Activated naive CD4-positive, alpha-beta T cell treated with anti-CD3 and anti-CD28 coated beads for 36 hours (primary cell): ENCODE measurements at regions of chr13 and their contacts with region 1.

Region 1: GRCh38 chr13:98672944-98673545 is 79.4 kb downstream of the SLC15A1 start:
- DNase-seq: peak; percentile 66
- H3K4me3 Mint-ChIP-seq: no peak overlapping the region
- H3K27ac Mint-ChIP-seq: no peak overlapping the region
- H3K4me1 Mint-ChIP-seq: no peaks in the 10 kb centered on the region
- H3K27me3 Mint-ChIP-seq: no peaks in the 10 kb centered on the region

Region 2: DNA sequence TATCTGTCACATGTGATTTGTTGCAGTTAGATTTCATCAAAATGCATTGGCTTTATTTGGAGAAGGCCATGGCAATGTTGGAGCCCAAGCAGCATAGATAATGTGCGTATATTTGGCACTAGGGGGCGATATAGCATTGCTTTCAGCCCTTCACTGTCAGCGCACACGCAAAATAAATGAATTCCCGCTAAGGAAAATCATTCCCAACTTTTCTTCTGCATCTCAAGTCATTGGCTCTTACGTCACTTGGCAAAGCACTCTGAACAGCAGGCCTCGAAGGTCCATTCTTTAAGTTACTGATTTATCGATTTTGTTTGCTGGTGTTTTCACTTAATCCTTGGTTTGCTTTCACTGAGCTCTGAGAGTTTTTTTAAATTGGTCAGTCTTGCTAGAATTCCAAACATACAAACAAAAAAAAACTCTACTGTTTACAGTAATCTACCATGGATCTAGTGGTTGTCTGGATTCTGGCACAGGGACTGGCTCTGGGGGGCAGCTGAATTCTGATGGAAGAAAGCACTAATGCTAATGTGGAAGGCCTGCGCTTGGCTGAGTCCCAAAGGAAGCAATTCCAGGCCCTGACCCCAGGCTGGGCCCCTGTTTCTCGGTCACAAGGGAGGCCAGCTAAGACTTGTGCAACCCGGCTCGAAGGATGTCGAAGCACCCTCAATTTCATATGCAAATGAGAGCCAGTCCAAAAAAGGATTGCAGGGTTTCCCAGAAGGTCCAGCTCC is 817.3 kb before region 1 on chr13:
- CTCF ChIA-PET with region 1: interaction called, 3 read pairs
- intact Hi-C with region 1: loop called (anchors 1 kb)
- DNase-seq: peak; percentile 30
- H3K4me3 Mint-ChIP-seq: no peak overlapping the region
- H3K27ac Mint-ChIP-seq: no peak overlapping the region
- H3K4me1 Mint-ChIP-seq: no peaks in the 10 kb centered on the region
- H3K27me3 Mint-ChIP-seq: peaks cover 13% of the 10 kb centered on the region

Region 3: DNA sequence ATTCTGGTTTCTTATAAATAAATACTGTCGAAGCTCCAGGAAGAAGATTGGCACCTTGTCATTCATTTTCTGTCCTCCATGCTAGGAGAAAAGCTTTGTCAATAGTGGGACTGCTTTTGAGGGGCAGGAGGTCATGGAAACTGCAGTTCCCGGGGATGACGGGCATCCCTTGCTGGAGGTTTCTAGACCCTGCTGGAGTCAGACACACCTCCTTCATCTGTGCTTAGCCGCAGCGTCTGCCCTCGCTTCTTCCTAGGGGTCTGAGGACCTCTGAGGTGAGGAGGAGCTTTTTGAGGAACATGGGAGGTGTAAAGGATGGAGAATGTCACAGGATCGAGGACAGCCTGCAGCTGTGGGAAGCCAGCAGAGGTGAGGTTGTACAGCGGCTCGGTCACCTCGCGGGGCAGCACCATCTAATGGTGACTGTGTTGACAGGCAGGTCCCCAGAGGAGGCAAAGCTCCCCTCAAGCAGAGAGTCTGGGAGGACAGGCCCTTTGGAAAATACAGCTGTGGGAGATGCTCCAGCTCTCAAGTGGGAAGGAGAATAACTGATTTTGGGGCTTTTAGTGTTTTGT is 323.2 kb before region 1 on chr13:
- CTCF ChIA-PET with region 1: no interaction called
- intact Hi-C with region 1: loop called (anchors 1 kb)
- DNase-seq: no peak
- H3K4me3 Mint-ChIP-seq: no peak overlapping the region
- H3K27ac Mint-ChIP-seq: no peak overlapping the region
- H3K4me1 Mint-ChIP-seq: no peaks in the 10 kb centered on the region
- H3K27me3 Mint-ChIP-seq: no peaks in the 10 kb centered on the region

Region 4: GRCh38 chr13:98685146-98685545 is 12.1 kb after region 1 on chr13:
- CTCF ChIA-PET with region 1: interaction called, 10 read pairs
- intact Hi-C with region 1: no loop called
- DNase-seq: no peak
- H3K4me3 Mint-ChIP-seq: no peak overlapping the region
- H3K27ac Mint-ChIP-seq: no peak overlapping the region
- H3K4me1 Mint-ChIP-seq: no peaks in the 10 kb centered on the region
- H3K27me3 Mint-ChIP-seq: no peaks in the 10 kb centered on the region

Region 5: DNA sequence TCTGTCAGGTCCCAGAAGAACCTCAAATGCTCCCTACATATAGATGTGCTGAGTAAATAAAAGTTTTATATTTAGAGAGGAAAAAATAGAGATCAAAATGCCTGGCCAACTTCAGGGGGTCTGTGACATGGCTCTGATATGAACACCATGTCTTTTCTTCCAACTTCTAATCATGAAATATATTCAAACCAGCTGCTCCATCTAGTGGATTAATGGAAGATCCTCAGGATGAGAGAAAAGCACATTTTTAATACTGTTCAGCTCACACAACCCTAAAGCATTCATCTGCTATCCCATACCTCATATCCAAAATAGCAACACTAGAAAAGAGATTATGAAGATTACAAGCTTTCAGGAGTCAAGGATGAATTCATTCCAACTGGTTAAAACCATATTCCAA is 360.8 kb after region 1 on chr13:
- CTCF ChIA-PET with region 1: no interaction called
- intact Hi-C with region 1: loop called (anchors 1 kb)
- DNase-seq: no peak
- H3K4me3 Mint-ChIP-seq: no peak overlapping the region
- H3K27ac Mint-ChIP-seq: no peak overlapping the region
- H3K4me1 Mint-ChIP-seq: peaks cover 45% of the 10 kb centered on the region
- H3K27me3 Mint-ChIP-seq: no peaks in the 10 kb centered on the region